ENCODE measurements at regions of chr15 and their contacts with region 1.

Region 1: GRCh38 chr15:68536331-68537095 is 42.3 kb upstream of the CORO2B start:
- DNase-seq: no peak

Region 2: GRCh38 chr15:68578174-68578979 is 41.9 kb after region 1 on chr15:
- intact Hi-C with region 1: loop called in 1 of 2 experiments (anchors 2 kb)
- DNase-seq: peak; percentile 95